Posterior cingulate gyrus (tissue), 11 donors: ENCODE measurements at regions of chr12 and their contacts with region 1.

Region 1: DNA sequence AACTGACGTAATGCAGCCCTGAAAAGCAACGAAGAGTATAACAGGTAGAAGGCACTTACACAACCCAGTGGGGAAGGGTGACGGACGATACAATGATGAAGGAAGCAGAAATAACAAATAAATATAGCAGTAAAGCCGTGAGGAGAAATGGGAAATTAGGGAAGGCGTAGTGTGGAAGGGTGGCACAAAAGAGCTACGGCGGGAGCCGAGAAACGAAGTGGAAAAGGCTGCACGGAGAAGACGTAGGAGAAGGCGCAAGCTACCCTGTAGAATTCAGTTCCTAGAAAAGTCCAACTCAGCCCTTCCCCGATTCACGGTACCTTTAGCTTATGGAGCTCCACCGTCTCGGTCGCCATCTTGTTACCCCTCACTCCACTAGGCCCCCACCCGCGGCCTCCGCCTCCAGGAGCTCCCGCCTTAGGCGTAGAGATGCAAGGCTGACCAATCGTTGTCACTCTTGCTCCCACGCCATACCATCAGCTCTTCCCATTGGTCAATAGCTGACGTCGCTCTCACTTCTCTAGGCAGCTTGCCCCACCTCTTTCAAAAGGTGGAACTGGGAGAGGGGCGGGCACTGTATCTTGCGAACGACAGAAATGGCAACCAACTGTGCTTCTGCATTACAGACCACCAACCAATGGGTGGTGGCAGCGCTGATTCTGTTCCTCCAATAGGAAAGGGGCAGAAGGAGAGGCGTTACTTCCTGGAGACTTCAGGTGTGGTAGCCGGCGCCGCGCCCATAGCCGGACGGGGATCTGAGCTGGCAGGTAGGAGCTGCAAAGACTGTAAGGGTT is at the starts of genes ORMDL2 and SARNP:
- DNase-seq: peak; percentile 94 to 100 (median 98)

Region 2: DNA sequence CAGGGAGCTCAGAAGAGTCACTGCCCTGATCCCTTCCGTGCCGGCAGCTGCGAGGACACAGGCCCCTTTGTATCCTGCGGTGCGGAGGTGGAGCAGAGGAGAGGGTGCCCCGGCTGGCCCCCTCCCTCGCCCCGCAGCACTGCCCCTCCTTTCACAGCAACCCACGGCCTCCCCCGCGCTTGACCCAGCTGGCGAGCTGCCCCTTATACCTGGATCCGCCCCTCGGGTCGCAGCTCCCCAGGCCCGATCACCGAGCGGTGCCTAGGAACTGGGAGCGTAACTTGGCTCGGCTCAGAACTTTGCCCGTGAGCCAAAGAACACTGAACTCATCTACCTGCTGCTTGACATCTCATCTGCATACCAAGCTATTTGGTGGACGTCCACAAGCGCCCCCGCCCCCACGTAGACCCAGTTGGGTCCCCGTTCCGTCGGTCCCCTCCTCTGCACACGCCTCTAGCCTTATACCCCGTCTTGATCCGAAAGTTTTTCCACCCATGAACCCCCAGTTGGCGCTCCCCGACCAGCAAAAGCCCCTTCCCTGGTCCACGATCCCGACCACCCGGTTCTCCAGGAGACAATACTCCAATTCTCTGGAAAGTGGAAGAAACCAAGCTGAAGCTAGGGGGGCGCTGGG is 12.5 kb after region 1 on chr12:
- intact Hi-C with region 1: loop called (anchors 1 kb)
- DNase-seq: peak; percentile 48 to 93 (median 60)

Region 3: DNA sequence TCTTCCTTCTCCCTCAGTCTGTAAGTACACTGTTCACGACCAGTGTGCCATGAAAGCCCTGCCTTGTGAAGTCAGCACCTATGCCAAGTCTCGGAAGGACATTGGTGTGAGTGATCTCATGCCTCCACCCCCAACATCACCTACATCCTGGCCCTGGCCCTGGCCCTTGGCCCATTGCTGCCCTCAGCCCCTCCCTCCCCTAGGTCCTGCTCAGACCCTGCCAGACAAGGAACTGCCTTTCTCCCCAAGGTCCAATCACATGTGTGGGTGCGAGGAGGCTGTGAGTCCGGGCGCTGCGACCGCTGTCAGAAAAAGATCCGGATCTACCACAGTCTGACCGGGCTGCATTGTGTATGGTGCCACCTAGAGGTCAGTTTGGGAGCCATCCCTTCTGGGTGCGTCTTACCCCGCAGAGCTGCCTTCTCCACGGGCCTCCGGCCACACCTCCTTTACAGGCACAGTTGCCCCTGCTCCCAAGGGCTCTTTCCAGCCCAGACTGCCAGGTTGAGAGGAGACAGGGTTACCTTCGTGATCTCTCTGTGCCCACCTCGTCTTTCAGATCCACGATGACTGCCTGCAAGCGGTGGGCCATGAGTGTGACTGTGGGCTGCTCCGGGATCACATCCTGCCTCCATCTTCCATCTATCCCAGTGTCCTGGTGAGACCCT is 122.7 kb after region 1 on chr12:
- intact Hi-C with region 1: loop called (anchors 5 kb)
- DNase-seq: peak; percentile 66 to 96 (median 86)